ENCODE measurements at regions of chr2 and their contacts with region 1.

Region 1: DNA sequence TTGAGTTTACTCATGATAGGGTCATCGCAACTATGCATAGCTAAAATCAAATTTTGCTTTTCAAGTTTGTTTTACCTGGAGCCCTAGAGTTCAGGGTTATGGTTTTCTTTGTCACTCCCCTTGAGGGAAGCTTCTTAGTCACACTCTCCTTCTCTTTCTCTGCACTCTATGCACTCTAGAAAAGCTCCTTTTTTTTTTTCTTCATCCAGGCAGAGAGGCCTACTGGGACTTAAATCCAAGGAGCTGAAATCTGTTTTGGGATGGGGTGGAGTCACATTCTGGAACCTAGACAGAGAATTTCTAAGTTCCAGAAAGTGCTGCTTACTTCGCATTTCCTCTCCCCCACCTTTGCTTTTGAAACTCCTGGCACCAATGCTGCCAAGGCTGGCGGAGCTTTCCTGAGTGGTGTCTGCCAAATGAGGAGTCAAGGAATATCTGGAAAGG is 19.1 kb upstream of the IL18R1 start:
- DNase-seq: no peak
- H3K4me3 Mint-ChIP-seq: no peak overlapping the region
- H3K27ac Mint-ChIP-seq: peak overlapping the region; percentile 10
- H3K4me1 Mint-ChIP-seq: peaks cover 49% of the 10 kb centered on the region
- H3K27me3 Mint-ChIP-seq: no peaks in the 10 kb centered on the region

Region 2: GRCh38 chr2:102301867-102302362 is 34.6 kb before region 1 on chr2:
- intact Hi-C with region 1: loop called (anchors 2 kb)
- DNase-seq: peak; percentile 55
- H3K4me3 Mint-ChIP-seq: peak overlapping the region; percentile 59
- H3K27ac Mint-ChIP-seq: peak overlapping the region; percentile 96
- H3K4me1 Mint-ChIP-seq: peaks cover 76% of the 10 kb centered on the region
- H3K27me3 Mint-ChIP-seq: no peaks in the 10 kb centered on the region

Region 3: DNA sequence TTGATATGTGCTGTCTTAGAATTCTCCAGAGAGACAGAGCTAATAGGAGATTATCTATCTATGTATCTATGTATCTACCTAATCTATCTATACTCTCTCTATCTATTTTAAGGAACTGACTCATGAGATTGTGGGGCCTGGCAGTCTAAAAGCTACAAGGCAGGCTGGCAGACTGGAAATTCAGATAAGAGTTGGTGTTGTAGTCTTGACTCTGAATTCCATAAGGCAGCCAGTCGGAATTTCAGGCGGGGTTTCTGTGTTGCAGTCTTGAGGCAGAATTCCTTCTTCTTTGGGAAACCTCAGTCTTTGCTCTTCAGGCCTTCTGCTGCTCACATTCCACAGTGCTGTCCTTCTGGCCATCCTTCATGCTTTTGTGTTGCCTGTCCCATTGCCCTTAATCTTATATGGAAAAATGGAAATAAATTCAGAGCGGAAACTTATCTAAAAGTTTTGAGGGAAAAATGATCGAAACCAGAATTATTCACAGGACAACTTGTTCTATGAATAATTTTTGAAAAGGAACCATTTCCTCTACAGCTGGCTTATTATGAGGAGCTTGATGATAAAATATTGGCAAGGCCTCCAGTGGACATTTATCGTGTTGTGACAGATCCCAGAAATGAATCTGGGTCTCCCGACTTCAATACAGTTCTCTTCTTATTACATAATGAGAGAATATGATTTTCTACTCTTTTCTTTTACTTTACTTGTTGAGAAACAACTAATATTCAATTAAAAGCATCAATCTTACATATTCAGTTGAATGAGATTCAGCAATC is 14.4 kb before region 1 on chr2:
- intact Hi-C with region 1: loop called (anchors 2 kb)
- DNase-seq: no peak
- H3K4me3 Mint-ChIP-seq: no peak overlapping the region
- H3K27ac Mint-ChIP-seq: no peak overlapping the region
- H3K4me1 Mint-ChIP-seq: peaks cover 14% of the 10 kb centered on the region
- H3K27me3 Mint-ChIP-seq: no peaks in the 10 kb centered on the region

Region 4: GRCh38 chr2:102350137-102350793 is 13.7 kb after region 1 on chr2:
- intact Hi-C with region 1: loop called (anchors 2 kb)
- DNase-seq: no peak
- H3K4me3 Mint-ChIP-seq: no peak overlapping the region
- H3K27ac Mint-ChIP-seq: peak overlapping the region; percentile 0
- H3K4me1 Mint-ChIP-seq: peaks cover 29% of the 10 kb centered on the region
- H3K27me3 Mint-ChIP-seq: no peaks in the 10 kb centered on the region

Measured in activated T-helper 2 cell treated with anti-CD3 and anti-CD28 coated beads, Interferon-gamma antibody, Interleukin-2, Interleukin-4, amounts not matched to agents 10 μg/mL and 5 μg/mL and 100 μg/mL, durations not matched to agents 14 hours and 24 hours and 36 hours (primary cell).